AG04450 (cell line): ENCODE measurements at regions of chr4 and their contacts with region 1.

Region 1: DNA sequence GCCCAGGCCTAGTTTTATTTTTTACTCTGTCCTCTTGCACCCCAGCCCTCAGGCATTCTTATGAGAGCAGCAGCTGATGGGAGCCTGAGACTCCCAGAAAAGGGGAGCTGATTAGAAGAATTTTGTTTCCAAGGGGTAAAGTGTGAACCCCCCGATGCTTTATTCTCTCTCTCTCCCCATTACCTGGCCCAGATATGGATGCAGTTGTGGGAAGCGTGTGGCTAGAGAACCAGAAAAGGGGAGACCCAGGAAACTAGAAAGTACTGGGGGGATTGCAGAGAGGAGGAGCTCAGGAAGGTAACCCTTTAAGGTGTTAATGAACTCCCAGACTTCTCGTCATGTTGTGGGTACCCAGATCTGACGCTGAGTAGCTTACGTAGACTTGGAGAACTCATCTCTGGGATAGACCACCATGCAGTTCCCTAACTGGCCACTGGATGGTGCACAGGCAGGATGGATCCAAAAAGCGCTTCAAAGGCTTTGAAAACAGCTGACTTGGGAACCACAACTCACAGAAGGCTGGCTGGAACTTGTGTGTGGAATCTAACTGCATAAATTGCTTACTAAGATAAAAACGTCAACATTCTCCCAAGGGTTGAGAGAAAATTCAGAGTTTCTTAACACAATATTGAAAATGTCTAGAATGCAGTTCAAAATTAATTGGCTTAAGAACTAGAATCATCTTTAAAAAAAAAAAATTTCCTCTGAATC is 64.7 kb downstream of the TBC1D14 start:
- DNase-seq: peak; percentile 67
- H3K4me3 ChIP-seq: no peak overlapping the region
- H3K27ac ChIP-seq: no peak overlapping the region
- H3K27me3 ChIP-seq: no peaks in the 10 kb centered on the region
- CTCF ChIP-seq: peak; percentile 99

Region 2: DNA sequence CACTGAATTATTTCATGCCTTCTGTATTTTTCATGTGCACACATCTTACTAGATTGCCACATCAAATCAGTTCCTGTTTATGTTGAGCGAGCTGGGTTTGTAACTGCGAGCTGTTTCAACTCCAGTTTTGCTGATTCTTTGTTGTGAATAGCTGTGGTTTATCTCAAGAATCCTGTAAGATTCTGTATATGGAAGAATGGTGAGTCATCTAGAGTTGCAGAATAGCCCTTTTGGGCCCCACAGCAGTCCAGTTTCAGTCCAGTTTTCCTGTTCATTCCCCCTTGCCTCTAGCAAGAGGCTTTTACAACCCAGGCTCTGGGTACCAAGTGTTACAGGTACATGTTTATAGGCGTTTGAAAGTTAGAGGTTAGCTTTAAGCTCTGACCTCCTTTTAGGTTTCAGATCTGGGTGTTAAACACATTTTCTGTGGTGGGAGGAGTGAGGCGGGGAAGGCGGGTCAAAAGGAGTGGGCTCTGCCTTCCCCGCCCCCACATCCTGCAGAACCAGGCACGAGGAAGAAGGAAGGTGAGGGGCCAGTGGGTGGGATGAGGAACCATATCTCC is 32.0 kb before region 1 on chr4:
- CTCF ChIA-PET with region 1: interaction called, 10 read pairs
- POLR2A ChIA-PET with region 1: no interaction called
- DNase-seq: peak; percentile 94
- H3K4me3 ChIP-seq: peak overlapping the region; percentile 35
- H3K27ac ChIP-seq: peak overlapping the region; percentile 89
- H3K27me3 ChIP-seq: no peaks in the 10 kb centered on the region
- CTCF ChIP-seq: no peak

Region 3: DNA sequence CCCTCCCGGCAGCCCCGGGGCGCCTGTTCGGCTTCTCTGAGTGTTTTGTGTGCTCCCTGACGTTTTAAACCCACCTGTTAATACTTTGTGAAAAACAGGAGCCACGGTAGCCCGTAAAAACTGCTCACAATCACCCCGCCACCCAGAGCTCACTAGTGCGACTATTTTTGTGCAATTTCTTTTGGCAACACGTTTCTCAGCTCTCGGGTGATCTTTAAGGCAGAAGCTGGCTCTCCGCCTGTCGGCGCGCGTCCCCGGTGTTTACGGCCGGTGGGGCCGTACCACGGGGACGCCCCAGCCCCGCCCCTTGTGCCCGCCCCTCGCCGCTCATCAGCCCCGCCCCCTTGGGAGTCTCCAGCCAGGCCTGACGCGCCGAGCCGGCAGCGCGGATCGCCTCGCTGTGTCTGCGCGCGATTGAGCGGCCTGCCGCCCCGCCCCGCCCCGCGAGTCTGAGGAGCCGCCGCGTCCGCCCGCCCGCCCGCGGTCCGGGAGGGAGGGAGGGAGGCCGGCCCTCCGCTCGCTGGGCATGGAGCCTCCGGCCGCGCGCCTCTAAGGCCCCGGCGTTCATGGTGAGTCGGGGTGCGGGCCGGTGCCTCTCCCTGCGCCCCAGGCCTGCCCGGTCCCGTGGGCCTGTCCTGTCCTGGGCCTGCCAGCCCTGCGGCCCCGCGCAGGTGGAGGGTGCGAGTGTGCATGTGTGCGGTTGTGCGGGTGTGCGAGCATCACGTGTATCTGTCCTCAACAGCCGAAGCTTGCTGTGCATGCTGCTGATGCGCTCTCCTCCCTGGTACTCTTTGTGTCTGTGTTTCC is 12.7 kb after region 1 on chr4:
- CTCF ChIA-PET with region 1: interaction called, 38 read pairs
- POLR2A ChIA-PET with region 1: interaction called, 9 read pairs
- DNase-seq: peak; percentile 66
- H3K4me3 ChIP-seq: peak overlapping the region; percentile 95
- H3K27ac ChIP-seq: peak overlapping the region; percentile 95
- H3K27me3 ChIP-seq: no peaks in the 10 kb centered on the region
- CTCF ChIP-seq: no peak